Esophagus muscularis mucosa (tissue), 4 donors: ENCODE measurements at regions of chr1 and their contacts with region 1.

Region 1: GRCh38 chr1:2194898-2195673 is 514 bp upstream of the FAAP20 start:
- DNase-seq: peak; percentile 98
- H3K4me3 ChIP-seq: peak overlapping the region; percentile 67 to 84 (median 76)
- H3K27ac ChIP-seq: peak overlapping the region; percentile 94 to 99 (median 98)
- H3K4me1 ChIP-seq: peaks cover 61 to 78% (median 72%) of the 10 kb centered on the region in 4 donors
- H3K27me3 ChIP-seq: no peaks in the 10 kb centered on the region
- CTCF ChIP-seq: peak; percentile 93 to 99 (median 97)
- EP300 ChIP-seq: no peak
- POLR2A ChIP-seq: no peak

Region 2: GRCh38 chr1:2073382-2074230 is 121.5 kb before region 1 on chr1:
- intact Hi-C with region 1: no loop called
- DNase-seq: no peak
- H3K4me3 ChIP-seq: peak overlapping the region in 1 of 4 donors; percentile 16
- H3K27ac ChIP-seq: no peak overlapping the region
- H3K4me1 ChIP-seq: no peaks in the 10 kb centered on the region
- H3K27me3 ChIP-seq: peaks cover 0 to 97% (median 0%) of the 10 kb centered on the region in 4 donors
- CTCF ChIP-seq: no peak
- EP300 ChIP-seq: no peak
- POLR2A ChIP-seq: no peak

Region 3: GRCh38 chr1:2233997-2234761 is 39.1 kb after region 1 on chr1:
- intact Hi-C with region 1: loop called (anchors 5 kb)
- DNase-seq: peak; percentile 98
- H3K4me3 ChIP-seq: peak overlapping the region; percentile 74 to 96 (median 81)
- H3K27ac ChIP-seq: peak overlapping the region; percentile 89 to 94 (median 92)
- H3K4me1 ChIP-seq: peaks cover 92 to 100% (median 99%) of the 10 kb centered on the region in 4 donors
- H3K27me3 ChIP-seq: no peaks in the 10 kb centered on the region
- CTCF ChIP-seq: no peak
- EP300 ChIP-seq: no peak
- POLR2A ChIP-seq: no peak

Region 4: GRCh38 chr1:2381741-2382620 is 186.9 kb after region 1 on chr1:
- intact Hi-C with region 1: loop called (anchors 1 kb)
- DNase-seq: no peak
- H3K4me3 ChIP-seq: no peak overlapping the region
- H3K27ac ChIP-seq: peak overlapping the region in 2 of 4 donors; percentile 5 to 13
- H3K4me1 ChIP-seq: peaks cover 9 to 20% (median 15%) of the 10 kb centered on the region in 4 donors
- H3K27me3 ChIP-seq: no peaks in the 10 kb centered on the region
- CTCF ChIP-seq: peak; percentile 95 to 99 (median 97)
- EP300 ChIP-seq: no peak
- POLR2A ChIP-seq: no peak